Activated CD4-positive, alpha-beta memory T cell treated with anti-CD3 and anti-CD28 coated beads for 36 hours (primary cell): ENCODE measurements at regions of chr17 and their contacts with region 1.

Region 1: GRCh38 chr17:40075201-40075941 is 12.6 kb downstream of the THRA start:
- DNase-seq: peak; percentile 80
- H3K4me3 Mint-ChIP-seq: no peak overlapping the region
- H3K27ac Mint-ChIP-seq: peak overlapping the region; percentile 34
- H3K4me1 Mint-ChIP-seq: peaks cover 19% of the 10 kb centered on the region
- H3K27me3 Mint-ChIP-seq: no peaks in the 10 kb centered on the region

Region 2: DNA sequence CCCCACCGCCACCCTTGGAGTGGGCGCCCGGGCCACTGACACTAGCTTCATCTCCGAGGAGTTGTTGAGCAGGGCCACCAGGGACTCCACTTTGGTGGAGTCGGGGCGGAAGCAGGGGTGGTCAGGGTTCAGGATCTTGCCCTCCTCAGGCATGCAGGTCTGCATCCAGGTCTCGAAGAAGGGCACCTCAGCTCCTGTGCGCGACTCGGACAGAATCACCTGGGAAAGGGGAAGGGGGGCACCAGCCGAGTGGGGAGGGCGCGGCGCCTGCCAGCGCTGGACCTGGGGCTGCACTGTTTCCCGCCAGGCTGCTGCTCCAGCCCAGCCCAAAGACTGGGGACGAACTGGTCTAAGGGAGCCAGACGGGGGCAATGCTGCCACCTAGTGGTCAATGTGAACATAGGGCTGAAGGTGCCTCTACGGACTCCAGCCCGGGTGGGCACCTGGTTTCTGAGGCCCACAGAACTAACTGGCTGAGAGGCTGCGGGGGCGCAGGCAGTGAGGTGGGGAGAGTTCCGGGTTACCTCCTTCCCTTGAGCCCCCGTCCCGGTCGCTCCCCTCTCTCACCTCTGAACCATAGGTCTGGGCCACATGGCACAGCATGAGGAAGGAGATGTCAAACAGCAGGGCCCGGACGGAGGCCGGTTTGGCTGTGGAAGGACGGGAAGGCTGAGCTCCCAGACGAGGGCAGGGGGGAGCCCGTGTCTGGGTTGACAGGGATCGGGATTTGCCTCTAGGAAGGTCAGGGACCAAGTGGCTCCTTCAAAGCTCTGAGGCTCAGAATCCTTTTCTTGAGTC is 48.4 kb before region 1 on chr17:
- CTCF ChIA-PET with region 1: interaction called, 24 read pairs
- POLR2A ChIA-PET with region 1: no interaction called
- intact Hi-C with region 1: no loop called
- DNase-seq: peak; percentile 82
- H3K4me3 Mint-ChIP-seq: no peak overlapping the region
- H3K27ac Mint-ChIP-seq: no peak overlapping the region
- H3K4me1 Mint-ChIP-seq: peaks cover 21% of the 10 kb centered on the region
- H3K27me3 Mint-ChIP-seq: no peaks in the 10 kb centered on the region

Region 3: DNA sequence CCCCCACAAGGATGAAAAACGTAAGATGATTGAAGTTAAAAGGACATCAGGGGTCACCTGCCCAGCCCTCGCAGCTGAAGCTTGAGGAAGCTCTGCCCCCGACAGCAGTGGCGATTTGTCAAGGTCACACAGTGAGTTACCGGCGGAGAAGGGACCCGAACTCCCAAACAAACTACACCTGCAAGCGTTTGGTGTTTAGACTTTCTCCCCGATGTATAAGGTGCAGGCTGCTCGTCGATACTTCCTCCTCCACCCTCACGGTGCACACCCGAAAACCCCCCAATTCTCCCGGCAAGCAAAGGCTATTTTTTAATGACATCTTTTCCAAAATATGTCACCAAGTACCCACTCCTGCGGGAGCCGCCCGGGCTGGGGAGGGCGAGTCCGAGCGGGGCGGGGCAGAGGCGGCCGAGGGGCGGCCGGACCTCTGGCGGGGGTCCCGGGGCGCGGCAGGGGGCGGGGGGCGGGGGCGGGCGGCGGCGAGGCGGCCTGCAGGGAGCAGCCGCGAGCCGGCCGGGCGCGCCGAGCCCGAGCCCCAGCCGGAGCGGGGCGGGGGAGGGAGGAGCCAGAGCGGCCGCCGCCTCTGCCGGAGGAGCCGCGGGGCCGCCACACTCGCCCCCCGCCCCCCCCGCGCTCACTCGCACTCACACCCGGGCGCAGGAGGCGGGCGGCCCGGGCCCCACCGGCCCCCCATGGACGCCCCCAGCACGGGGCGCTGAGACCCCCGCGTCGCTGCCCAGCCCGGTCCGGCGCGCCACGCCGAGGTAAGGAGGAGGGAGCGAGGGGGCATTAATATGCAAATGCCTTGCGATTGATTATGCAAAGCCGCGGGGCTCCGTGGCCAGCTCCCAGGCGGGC is 12.8 kb before region 1 on chr17 and contains the start of gene THRA:
- CTCF ChIA-PET with region 1: interaction called, 156 read pairs
- POLR2A ChIA-PET with region 1: interaction called, 3 read pairs
- intact Hi-C with region 1: no loop called
- DNase-seq: peak; percentile 72
- H3K4me3 Mint-ChIP-seq: peak within 1 kb of the TSS; percentile 80
- H3K27ac Mint-ChIP-seq: peak within 1 kb of the TSS; percentile 44
- H3K4me1 Mint-ChIP-seq: peaks cover 39% of the 10 kb centered on the region
- H3K27me3 Mint-ChIP-seq: peaks cover 3% of the 10 kb centered on the region
- total RNA-seq, gene THRA: 12.5 to 13.4 TPM

Region 4: GRCh38 chr17:40098846-40099618 is 23.7 kb after region 1 on chr17:
- CTCF ChIA-PET with region 1: interaction called, 52 read pairs
- POLR2A ChIA-PET with region 1: no interaction called
- intact Hi-C with region 1: loop called (anchors 2 kb)
- DNase-seq: peak; percentile 99
- H3K4me3 Mint-ChIP-seq: peak overlapping the region; percentile 88
- H3K27ac Mint-ChIP-seq: peak overlapping the region; percentile 91
- H3K4me1 Mint-ChIP-seq: peaks cover 85% of the 10 kb centered on the region
- H3K27me3 Mint-ChIP-seq: no peaks in the 10 kb centered on the region

Region 5: GRCh38 chr17:40168262-40168832 is 93.0 kb after region 1 on chr17:
- CTCF ChIA-PET with region 1: interaction called, 12 read pairs
- POLR2A ChIA-PET with region 1: no interaction called
- intact Hi-C with region 1: no loop called
- DNase-seq: peak; percentile 34
- H3K4me3 Mint-ChIP-seq: no peak overlapping the region
- H3K27ac Mint-ChIP-seq: peak overlapping the region; percentile 1
- H3K4me1 Mint-ChIP-seq: peaks cover 3% of the 10 kb centered on the region
- H3K27me3 Mint-ChIP-seq: no peaks in the 10 kb centered on the region